OCI-LY7 (cell line): ENCODE measurements at regions of chr2 and their contacts with region 1.

Region 1: GRCh38 chr2:173402405-173402974 is 47.8 kb downstream of the CDCA7 start:
- DNase-seq: peak; percentile 78
- H3K4me3 ChIP-seq: no peak overlapping the region
- H3K27ac ChIP-seq: no peak overlapping the region
- H3K4me1 ChIP-seq: no peaks in the 10 kb centered on the region
- CTCF ChIP-seq: peak; percentile 89

Region 2: GRCh38 chr2:173027181-173028128 is 375.0 kb before region 1 on chr2:
- CTCF ChIA-PET with region 1: no interaction called
- POLR2A ChIA-PET with region 1: no interaction called
- intact Hi-C with region 1: loop called (anchors 2 kb)
- DNase-seq: peak; percentile 85
- H3K4me3 ChIP-seq: no peak overlapping the region
- H3K27ac ChIP-seq: no peak overlapping the region
- H3K4me1 ChIP-seq: no peaks in the 10 kb centered on the region
- CTCF ChIP-seq: peak; percentile 99

Region 3: DNA sequence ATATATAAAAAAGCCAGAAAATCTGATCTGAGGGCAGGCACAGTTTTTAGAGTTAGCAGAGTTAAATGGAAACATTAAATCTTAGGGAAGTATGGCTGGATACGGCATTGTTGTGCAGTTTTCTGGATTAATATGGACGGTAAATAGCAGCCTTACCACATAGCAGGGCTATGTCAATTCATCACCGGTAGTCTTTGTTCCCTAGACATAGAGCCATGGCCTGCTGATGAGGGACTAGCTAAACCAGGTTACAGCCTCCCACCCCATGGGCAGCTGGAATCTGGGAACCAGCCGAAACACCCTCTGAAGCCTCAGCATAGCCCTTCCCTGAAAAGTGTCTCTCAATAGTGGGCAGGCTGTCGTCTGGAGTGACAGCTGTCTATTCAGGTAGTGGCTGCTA is 15.4 kb before region 1 on chr2:
- CTCF ChIA-PET with region 1: no interaction called
- POLR2A ChIA-PET with region 1: no interaction called
- intact Hi-C with region 1: no loop called
- DNase-seq: no peak
- H3K4me3 ChIP-seq: no peak overlapping the region
- H3K27ac ChIP-seq: no peak overlapping the region
- H3K4me1 ChIP-seq: no peaks in the 10 kb centered on the region
- CTCF ChIP-seq: no peak

Region 4: GRCh38 chr2:173427887-173428600 is 25.6 kb after region 1 on chr2:
- CTCF ChIA-PET with region 1: no interaction called
- POLR2A ChIA-PET with region 1: no interaction called
- intact Hi-C with region 1: no loop called
- DNase-seq: no peak
- H3K4me3 ChIP-seq: no peak overlapping the region
- H3K27ac ChIP-seq: no peak overlapping the region
- H3K4me1 ChIP-seq: peaks cover 5% of the 10 kb centered on the region
- CTCF ChIP-seq: no peak

Region 5: GRCh38 chr2:173571021-173571882 is 168.8 kb after region 1 on chr2:
- CTCF ChIA-PET with region 1: no interaction called
- POLR2A ChIA-PET with region 1: no interaction called
- intact Hi-C with region 1: loop called (anchors 5 kb)
- DNase-seq: peak; percentile 50
- H3K4me3 ChIP-seq: no peak overlapping the region
- H3K27ac ChIP-seq: no peak overlapping the region
- H3K4me1 ChIP-seq: no peaks in the 10 kb centered on the region
- CTCF ChIP-seq: peak; percentile 64

Region 6: GRCh38 chr2:173749315-173749714 is 346.8 kb after region 1 on chr2:
- CTCF ChIA-PET with region 1: no interaction called
- POLR2A ChIA-PET with region 1: no interaction called
- intact Hi-C with region 1: loop called (anchors 2 kb)
- DNase-seq: no peak
- H3K4me3 ChIP-seq: no peak overlapping the region
- H3K27ac ChIP-seq: no peak overlapping the region
- H3K4me1 ChIP-seq: no peaks in the 10 kb centered on the region
- CTCF ChIP-seq: peak; percentile 25; the same call in 1 of the 2 replicates

Region 7: DNA sequence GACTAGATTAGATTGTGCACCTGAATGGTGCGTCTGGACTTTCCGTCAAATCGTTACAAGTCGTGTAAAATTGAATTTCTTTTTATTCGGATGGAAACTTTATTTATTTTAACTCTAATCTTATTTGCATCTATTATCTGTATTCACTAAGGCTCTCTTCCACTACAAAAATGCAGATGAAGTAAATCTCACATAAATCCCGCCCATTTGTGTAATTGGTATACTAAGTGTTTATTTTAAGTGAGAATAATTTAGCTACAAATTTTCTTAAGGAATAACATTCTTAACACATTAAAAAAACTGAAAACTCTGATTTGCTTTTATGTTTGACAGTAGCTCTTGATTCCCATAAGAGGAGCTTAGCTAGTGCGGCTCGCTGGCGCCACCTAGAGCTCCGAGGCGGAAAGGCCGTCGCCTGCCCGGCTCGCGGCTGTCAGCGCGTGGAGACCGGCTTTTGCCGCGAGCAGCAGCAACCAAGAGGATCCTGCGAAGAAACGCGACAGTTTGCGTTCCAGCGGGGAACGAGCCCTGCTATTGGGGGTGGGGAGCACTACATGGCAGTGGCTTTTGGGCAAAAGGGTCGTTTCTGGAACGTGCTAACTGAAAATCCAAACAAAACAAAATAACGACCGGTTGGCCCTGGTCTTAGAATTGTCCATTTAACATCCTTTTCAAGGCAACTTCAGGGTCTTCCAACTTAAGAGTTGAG is 939.0 kb after region 1 on chr2:
- CTCF ChIA-PET with region 1: interaction called, 3 read pairs
- POLR2A ChIA-PET with region 1: interaction called, 3 read pairs
- intact Hi-C with region 1: loop called (anchors 1 kb)
- DNase-seq: peak; percentile 83
- H3K4me3 ChIP-seq: peak overlapping the region; percentile 49
- H3K27ac ChIP-seq: no peak overlapping the region
- H3K4me1 ChIP-seq: peaks cover 16% of the 10 kb centered on the region
- CTCF ChIP-seq: peak; percentile 99